A673 (cell line): ENCODE measurements at regions of chr2 and their contacts with region 1.

Region 1: DNA sequence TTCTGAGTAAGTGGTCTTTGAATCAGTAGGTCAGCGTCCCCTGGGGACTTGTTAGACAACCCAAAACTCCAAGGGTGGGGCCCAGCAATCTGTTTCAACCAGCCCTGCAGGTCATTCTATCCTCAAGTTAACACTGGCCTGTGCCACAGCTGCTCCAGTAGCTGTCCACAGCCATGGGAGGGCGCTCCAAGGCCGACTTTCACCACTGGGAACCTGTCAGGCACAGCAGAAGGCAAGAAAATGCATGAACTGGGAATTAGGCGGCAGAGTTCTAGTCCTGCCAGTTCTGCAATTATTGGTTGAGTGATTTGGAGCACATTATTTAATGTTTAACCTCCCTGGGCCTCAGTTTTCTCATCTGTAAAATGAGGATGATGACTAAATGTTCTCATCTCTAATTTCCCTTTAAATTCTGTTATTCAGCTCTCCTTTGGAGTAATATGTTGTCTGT is 17.4 kb upstream of the MRPL33 start:
- DNase-seq: peak; percentile 79
- H3K4me3 ChIP-seq: no peak overlapping the region
- H3K27ac ChIP-seq: no peak overlapping the region
- H3K4me1 ChIP-seq: no peaks in the 10 kb centered on the region
- H3K27me3 ChIP-seq: no peaks in the 10 kb centered on the region
- CTCF ChIP-seq: peak; percentile 94

Region 2: DNA sequence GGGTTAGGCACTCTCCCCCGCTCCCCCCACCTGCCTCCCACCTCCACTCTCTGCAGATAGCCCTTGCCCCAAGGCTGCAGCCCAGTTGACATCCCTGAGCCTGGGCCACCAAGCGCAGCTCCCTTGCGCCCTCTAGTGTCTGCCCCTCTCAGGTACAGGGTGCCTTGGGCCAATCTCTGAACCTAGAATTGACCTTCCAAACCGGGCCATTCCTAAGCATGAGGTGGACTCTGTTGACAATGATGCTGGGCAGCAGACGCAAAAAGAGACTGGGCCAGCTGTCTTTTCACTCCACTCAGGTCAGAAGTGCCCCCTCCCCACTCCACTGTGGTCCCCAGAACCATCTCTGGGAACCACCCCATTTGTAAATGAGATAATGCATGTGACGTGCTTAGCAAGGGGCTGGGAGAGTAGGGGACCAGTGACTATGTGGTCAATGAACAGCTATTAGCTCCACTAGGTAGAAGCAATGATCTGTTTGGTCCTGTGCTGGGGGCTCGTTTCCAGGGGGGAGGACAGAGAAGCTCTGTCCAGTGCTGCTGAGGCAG is 698.4 kb after region 1 on chr2:
- CTCF ChIA-PET with region 1: interaction called, 5 read pairs
- POLR2A ChIA-PET with region 1: no interaction called
- intact Hi-C with region 1: loop called (anchors 1 kb)
- DNase-seq: peak; percentile 42
- H3K4me3 ChIP-seq: no peak overlapping the region
- H3K27ac ChIP-seq: no peak overlapping the region
- H3K4me1 ChIP-seq: no peaks in the 10 kb centered on the region
- H3K27me3 ChIP-seq: no peaks in the 10 kb centered on the region
- CTCF ChIP-seq: peak; percentile 89